Psoas muscle (tissue), 8 donors: ENCODE measurements at regions of chr12 and their contacts with region 1.

Region 1: GRCh38 chr12:56425193-56425592 is 24.0 kb downstream of the TIMELESS start:
- DNase-seq: no peak
- ATAC-seq: no peak
- H3K4me3 ChIP-seq: no peak overlapping the region
- H3K27ac ChIP-seq: no peak overlapping the region
- H3K4me1 ChIP-seq: no peaks in the 10 kb centered on the region
- H3K27me3 ChIP-seq: no peaks in the 10 kb centered on the region
- CTCF ChIP-seq: no peak

Region 2: GRCh38 chr12:55797068-55797467 is 628.1 kb before region 1 on chr12:
- intact Hi-C with region 1: no loop called
- DNase-seq: no peak
- ATAC-seq: peak in 1 of 4 donors; percentile 53
- H3K4me3 ChIP-seq: no peak overlapping the region
- H3K27ac ChIP-seq: no peak overlapping the region
- H3K4me1 ChIP-seq: no peaks in the 10 kb centered on the region
- H3K27me3 ChIP-seq: no peaks in the 10 kb centered on the region
- CTCF ChIP-seq: peak; percentile 50

Region 3: DNA sequence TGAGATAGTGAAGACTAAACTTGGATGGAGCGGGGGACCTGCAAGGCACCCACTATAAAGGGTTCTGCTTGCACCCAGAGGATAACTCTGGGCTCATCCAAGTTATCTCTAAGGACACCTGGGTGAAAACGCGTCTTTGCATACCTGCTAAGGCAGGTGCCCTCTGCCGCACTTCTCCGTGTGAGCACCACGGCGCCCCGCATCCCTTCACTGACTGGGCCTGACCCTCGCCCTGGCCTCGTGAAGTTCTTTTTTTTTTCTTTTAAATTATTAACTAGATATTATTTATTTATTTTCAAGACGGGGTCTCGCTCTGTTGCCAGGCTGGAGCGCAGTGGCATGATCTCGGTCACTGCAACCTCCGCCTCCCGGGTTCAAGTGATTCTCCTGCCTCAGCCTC is 42.6 kb before region 1 on chr12:
- intact Hi-C with region 1: loop called in 1 of 2 experiments (anchors 5 kb)
- DNase-seq: no peak
- ATAC-seq: no peak
- H3K4me3 ChIP-seq: no peak overlapping the region
- H3K27ac ChIP-seq: no peak overlapping the region
- H3K4me1 ChIP-seq: no peaks in the 10 kb centered on the region
- H3K27me3 ChIP-seq: peaks cover 0 to 2% (median 0%) of the 10 kb centered on the region in 3 donors
- CTCF ChIP-seq: no peak